Left ventricle myocardium superior (tissue), 1 donor: ENCODE measurements at regions of chr16 and their contacts with region 1.

Region 1: GRCh38 chr16:54526916-54527315 is 240.3 kb upstream of the IRX3 start:
- DNase-seq: no peak
- ATAC-seq: no peak

Region 2: DNA sequence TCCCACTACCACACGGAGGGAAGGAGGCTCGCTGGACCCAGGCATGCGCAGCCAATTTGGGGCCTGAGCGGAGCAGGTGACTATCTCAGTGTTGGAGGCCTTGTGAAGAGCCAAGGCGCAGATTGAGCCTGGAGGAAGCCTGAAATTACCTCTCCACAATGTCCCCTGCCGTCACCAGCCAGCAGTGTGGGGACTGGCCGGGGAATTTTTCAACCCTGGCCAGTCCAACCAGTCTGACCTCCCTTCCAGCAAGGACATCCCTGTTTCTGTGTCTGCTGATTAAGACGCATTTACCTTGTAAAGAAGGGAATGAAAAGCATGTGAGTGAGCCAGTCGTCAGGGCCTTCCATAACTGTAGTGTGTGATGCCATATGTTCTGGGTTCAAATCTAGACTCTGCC is 42.2 kb before region 1 on chr16:
- intact Hi-C with region 1: no loop called
- DNase-seq: no peak
- ATAC-seq: peak; percentile 27

Region 3: GRCh38 chr16:54585094-54585997 is 58.4 kb after region 1 on chr16:
- intact Hi-C with region 1: loop called (anchors 10 kb)
- DNase-seq: no peak
- ATAC-seq: no peak

Region 4: GRCh38 chr16:54627616-54628015 is 100.7 kb after region 1 on chr16:
- intact Hi-C with region 1: no loop called
- DNase-seq: no peak
- ATAC-seq: no peak